Astrocyte of the cerebellum (primary cell): ENCODE measurements at regions of chr13 and their contacts with region 1.

Region 1: DNA sequence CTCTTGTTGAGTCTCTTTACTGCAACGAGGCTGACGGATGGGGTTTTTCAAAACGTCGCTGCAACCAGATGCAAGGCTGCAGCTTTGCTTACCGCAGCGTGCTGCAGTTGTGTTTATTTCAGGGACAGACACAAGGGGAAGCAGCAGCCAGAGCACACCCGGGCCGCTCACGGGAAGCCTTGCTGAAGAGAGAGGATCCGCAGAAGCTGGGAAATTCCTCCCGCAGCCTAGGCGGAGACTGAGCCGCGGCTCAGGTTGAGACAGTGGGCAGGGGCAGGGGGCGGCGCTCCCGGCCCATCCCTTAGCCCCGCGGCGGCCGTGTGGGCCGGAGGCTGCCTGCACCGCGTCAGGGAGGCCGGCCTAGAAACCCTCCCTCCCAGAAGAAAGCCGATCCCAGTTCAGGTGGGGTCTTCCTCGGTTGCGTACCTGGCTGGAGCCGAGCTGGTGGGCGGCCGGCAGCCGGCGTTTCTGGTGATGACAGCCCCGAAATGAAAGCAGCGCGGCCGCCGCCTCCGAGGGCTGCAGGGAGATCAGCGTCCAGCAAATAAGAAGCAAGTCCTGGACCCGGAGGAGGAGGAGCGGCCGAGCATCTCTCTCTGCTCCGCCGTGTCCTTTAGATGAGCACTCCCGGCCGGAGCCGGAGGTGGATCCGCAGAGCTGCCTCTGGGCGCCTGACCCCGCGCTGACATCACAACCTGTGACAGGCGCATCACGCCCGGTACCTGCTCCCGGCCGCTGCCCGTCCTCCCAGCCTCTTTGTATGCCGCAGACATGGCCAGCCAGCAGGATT is at the start of gene FRY:
- DNase-seq: no peak
- H3K4me3 ChIP-seq: peak within 1 kb of the TSS; percentile 69
- CTCF ChIP-seq: peak; percentile 26

Region 2: DNA sequence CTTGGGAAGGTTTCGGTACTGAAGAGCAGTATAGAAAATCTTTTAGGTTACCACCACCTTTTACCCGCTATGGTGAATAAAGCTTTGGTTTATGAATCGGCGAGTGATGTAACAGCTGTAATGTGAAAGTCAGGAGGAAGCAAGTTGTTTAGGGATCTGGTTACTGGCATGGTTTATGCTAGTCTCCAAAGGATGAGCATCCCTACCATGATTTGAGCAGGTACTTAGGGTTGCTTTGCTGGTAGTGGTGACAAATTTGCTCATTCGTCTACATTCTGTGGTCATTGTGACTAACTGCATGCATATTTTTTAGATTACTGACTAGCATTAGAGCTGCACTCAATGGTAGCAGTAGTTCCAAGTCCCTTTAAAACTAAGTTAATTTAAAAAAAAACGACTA is 104.4 kb after region 1 on chr13:
- in situ Hi-C with region 1: loop called (anchors 5 kb)
- DNase-seq: no peak
- H3K4me3 ChIP-seq: no peak overlapping the region
- CTCF ChIP-seq: no peak

Region 3: GRCh38 chr13:32284927-32285632 is 253.9 kb after region 1 on chr13:
- in situ Hi-C with region 1: loop called (anchors 25 kb)
- DNase-seq: peak; percentile 74
- H3K4me3 ChIP-seq: no peak overlapping the region
- CTCF ChIP-seq: no peak

Region 4: DNA sequence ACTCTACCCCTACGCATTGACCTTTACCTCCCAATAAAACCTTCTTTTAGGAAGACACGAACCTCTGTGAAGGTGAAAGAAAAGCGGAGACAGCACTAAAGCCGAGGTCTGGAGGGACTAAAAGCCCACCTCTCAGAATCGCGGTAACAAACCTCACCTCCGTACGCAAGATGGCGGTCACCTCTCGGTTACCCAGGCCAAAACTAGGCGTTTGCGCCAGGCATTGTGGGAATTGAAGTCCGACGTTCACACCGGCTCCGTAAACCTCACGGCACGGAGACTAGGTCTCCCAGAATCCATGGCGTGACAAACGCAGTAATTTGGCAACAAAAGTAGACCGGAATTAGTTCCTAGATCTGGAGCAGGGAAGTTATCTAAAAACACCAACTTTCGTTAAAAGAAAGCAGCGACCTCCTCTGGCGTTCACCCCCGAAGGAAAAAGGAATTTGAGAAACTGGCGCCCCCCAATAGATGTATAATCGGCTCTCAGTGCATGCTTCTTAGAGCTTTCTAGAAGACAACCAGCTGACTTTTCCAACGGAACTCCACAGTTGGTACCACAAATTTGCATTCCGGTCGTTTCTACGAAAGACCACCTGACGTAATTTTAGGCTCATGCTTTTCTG is 507.5 kb after region 1 on chr13 and contains the start of gene N4BP2L2:
- in situ Hi-C with region 1: no loop called
- DNase-seq: peak; percentile 98
- H3K4me3 ChIP-seq: peak within 1 kb of the TSS; percentile 84
- CTCF ChIP-seq: peak; percentile 47